Endothelial cell of umbilical vein (primary cell): ENCODE measurements at regions of chr4 and their contacts with region 1.

Region 1: GRCh38 chr4:7719354-7720174 is 220.1 kb downstream of the AFAP1 start:
- DNase-seq: peak; percentile 24
- H3K4me3 ChIP-seq: no peak overlapping the region
- H3K27ac ChIP-seq: no peak overlapping the region
- H3K4me1 ChIP-seq: peaks cover 10% of the 10 kb centered on the region
- H3K27me3 ChIP-seq: peaks cover 0 to 1% of the 10 kb centered on the region in 2 experiments
- CTCF ChIP-seq: peak; percentile 75 to 83
- POLR2A ChIP-seq: no peak

Region 2: DNA sequence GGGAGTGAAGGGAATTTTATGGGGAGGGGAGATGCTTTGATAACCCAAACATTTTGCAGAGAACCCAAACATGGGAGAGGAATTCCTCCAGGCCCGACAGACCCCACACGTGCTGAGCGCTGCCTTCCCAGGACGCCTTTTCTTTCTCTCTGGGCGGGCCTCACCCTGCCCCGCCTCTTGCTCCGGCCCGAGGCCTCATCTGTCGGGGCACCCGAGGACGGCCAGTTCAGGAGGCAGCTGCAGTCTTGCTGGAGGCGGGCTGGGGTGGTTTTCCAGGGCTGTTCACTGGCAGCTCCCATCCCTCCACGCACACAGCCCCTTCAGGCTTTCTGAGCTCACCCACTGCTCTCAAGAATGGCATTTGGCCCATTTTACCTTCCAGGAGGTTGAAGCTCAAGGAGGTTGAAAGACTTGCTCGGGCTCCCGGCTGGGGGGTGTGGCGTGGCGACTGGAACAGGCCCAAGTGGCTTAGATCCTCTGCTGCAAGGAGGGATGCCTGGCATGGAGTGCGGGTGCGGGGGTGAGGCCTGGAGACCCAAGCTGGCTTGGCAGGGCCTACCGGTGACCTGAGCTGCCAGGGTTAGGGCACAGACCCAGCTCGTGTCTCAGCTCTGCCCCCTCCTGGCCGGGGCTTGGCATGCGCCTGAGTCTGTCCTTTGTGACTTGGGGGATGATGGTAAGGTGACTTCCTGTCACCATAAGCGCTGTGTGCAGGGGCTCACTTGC is 384.1 kb before region 1 on chr4:
- CTCF ChIA-PET with region 1: interaction called, 5 read pairs
- POLR2A ChIA-PET with region 1: no interaction called
- dilution Hi-C with region 1: no loop called
- intact Hi-C with region 1: loop called (anchors 5 kb)
- DNase-seq: peak; percentile 27
- H3K4me3 ChIP-seq: no peak overlapping the region
- H3K27ac ChIP-seq: no peak overlapping the region
- H3K4me1 ChIP-seq: no peaks in the 10 kb centered on the region
- H3K27me3 ChIP-seq: no peaks in the 10 kb centered on the region
- CTCF ChIP-seq: peak; percentile 70 to 82
- POLR2A ChIP-seq: no peak

Region 3: GRCh38 chr4:7365462-7366179 is 353.9 kb before region 1 on chr4:
- CTCF ChIA-PET with region 1: no interaction called
- POLR2A ChIA-PET with region 1: no interaction called
- dilution Hi-C with region 1: no loop called
- intact Hi-C with region 1: no loop called
- DNase-seq: no peak
- H3K4me3 ChIP-seq: no peak overlapping the region
- H3K27ac ChIP-seq: no peak overlapping the region
- H3K4me1 ChIP-seq: no peaks in the 10 kb centered on the region
- H3K27me3 ChIP-seq: no peaks in the 10 kb centered on the region
- CTCF ChIP-seq: no peak
- POLR2A ChIP-seq: no peak

Region 4: GRCh38 chr4:7524064-7524682 is 195.4 kb before region 1 on chr4:
- CTCF ChIA-PET with region 1: no interaction called
- POLR2A ChIA-PET with region 1: no interaction called
- dilution Hi-C with region 1: no loop called
- intact Hi-C with region 1: loop called (anchors 10 kb)
- DNase-seq: no peak
- H3K4me3 ChIP-seq: no peak overlapping the region
- H3K27ac ChIP-seq: no peak overlapping the region
- H3K4me1 ChIP-seq: no peaks in the 10 kb centered on the region
- H3K27me3 ChIP-seq: no peaks in the 10 kb centered on the region
- CTCF ChIP-seq: no peak
- POLR2A ChIP-seq: no peak

Region 5: DNA sequence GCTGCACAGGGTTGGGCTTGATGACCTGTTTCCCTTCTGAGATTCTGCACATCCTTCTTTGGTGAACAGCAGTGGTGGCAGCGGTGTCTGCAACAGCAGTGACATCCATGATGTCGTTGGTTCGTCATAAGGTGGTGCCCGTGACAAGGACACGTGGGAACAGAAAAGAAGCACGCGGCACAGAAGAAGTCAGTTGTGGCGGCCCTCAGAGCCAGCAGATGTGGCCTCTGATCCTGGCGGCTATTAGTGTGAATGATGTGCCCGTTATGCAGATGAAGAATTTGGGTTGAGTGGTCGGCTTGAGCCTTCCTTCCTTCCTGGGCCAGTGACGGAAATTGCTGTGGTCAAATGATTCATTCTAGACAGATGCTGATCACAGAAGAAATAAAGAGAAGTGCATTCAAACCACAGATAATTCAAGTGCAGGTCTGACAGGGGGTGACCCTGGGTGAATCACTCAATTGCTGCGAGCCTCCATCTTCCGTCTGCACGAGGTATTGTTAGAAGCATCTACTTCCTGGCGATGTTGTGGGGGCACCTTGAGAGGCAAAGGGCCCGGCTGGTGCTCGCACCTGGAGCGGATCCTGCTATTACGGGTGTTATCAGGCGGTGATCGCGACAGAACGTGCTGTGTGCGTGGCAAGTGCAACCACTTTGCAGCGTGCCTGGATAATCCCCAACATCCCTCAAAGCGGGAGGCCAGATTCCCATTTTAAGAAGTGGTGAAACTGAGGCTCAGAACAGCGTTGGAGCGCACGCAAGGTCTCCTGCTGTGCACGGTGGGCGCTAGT is 69.6 kb before region 1 on chr4:
- CTCF ChIA-PET with region 1: interaction called, 3 read pairs
- POLR2A ChIA-PET with region 1: no interaction called
- dilution Hi-C with region 1: no loop called
- intact Hi-C with region 1: loop called (anchors 2 kb)
- DNase-seq: peak; percentile 21
- H3K4me3 ChIP-seq: no peak overlapping the region
- H3K27ac ChIP-seq: peak overlapping the region; percentile 2
- H3K4me1 ChIP-seq: peaks cover 28% of the 10 kb centered on the region
- H3K27me3 ChIP-seq: no peaks in the 10 kb centered on the region
- CTCF ChIP-seq: no peak
- POLR2A ChIP-seq: no peak

Region 6: GRCh38 chr4:7673121-7673520 is 46.4 kb before region 1 on chr4:
- CTCF ChIA-PET with region 1: no interaction called
- POLR2A ChIA-PET with region 1: no interaction called
- dilution Hi-C with region 1: no loop called
- intact Hi-C with region 1: no loop called
- DNase-seq: no peak
- H3K4me3 ChIP-seq: no peak overlapping the region
- H3K27ac ChIP-seq: no peak overlapping the region
- H3K4me1 ChIP-seq: no peaks in the 10 kb centered on the region
- H3K27me3 ChIP-seq: peaks cover 4 to 7% of the 10 kb centered on the region in 2 experiments
- CTCF ChIP-seq: no peak
- POLR2A ChIP-seq: no peak